ENCODE measurements at regions of chr5 and their contacts with region 1.

Region 1: DNA sequence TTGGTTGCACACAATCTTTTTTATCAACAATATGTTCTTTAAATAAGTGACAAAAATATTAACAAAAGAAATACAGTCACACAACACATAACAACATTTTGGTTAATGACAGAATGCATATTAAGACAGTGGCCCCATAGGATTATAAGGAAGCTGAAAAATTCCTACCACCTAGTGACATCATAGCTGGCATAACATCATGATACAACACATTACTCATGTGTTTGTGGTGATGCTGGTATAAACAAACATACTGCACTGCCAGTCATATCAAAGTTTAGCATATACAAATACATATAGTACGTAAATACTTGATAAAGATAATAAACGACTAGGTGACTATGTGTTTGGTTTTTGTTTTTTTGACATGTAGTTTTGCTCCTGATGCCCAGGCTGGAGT is 344.8 kb upstream of the POU5F2 start:
- DNase-seq: no peak
- H3K4me3 ChIP-seq: no peak overlapping the region
- H3K27ac ChIP-seq: no peak overlapping the region
- H3K4me1 ChIP-seq: no peaks in the 10 kb centered on the region
- H3K27me3 ChIP-seq: no peaks in the 10 kb centered on the region
- CTCF ChIP-seq: no peak
- POLR2A ChIP-seq: no peak

Region 2: GRCh38 chr5:93930098-93930497 is 156.1 kb before region 1 on chr5:
- CTCF ChIA-PET with region 1: no interaction called
- POLR2A ChIA-PET with region 1: no interaction called
- dilution Hi-C with region 1: no loop called
- intact Hi-C with region 1: loop called (anchors 10 kb)
- DNase-seq: peak; percentile 63
- H3K4me3 ChIP-seq: no peak overlapping the region
- H3K27ac ChIP-seq: no peak overlapping the region
- H3K4me1 ChIP-seq: peaks cover 10% of the 10 kb centered on the region
- H3K27me3 ChIP-seq: no peaks in the 10 kb centered on the region
- CTCF ChIP-seq: no peak
- POLR2A ChIP-seq: no peak